ENCODE measurements at regions of chr16 and their contacts with region 1.

Region 1: DNA sequence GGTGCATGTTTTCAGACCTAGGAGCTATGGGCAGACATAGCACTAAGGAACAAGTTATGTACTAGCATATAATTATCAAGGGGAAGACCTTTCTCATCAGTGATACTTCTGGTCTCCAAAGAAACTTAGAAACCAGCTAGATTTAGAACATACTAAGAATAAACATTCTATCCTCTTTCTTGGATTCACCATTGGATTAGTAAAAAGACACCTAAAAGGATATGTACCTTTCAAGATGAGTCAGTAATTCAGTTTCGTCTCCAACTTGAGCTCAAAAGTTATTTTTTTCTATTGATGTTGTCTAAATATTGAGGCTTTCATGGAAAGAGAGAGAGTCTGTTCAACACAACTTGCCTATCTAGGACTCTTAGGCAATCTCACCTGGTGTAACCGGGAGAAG is 13.2 kb downstream of the ZNF821 start:
- DNase-seq: no peak

Region 2: DNA sequence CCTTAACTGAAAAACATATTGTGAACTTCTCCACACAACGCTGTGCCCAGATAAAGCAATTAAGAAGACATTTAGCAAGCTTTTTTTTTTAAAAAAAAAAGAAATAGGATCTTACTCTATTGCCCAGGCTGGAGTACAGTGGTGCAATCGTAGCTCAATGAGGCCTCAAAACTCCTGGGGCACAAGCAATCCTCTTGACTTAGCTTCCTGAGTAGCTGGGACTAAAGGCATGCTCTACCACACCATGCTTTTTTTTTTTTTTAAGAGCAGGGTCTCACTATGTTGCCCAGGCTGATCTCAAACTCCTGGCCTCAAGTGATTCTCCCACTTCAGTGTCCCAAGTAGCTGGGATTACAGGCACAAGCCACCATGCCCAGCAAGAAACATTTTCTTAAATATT is 82.2 kb before region 1 on chr16:
- in situ Hi-C with region 1: loop called (anchors 5 kb)
- DNase-seq: no peak

Region 3: GRCh38 chr16:71933913-71934695 is 63.3 kb after region 1 on chr16:
- in situ Hi-C with region 1: loop called (anchors 10 kb)
- DNase-seq: peak; percentile 51

Measured in G401 (cell line).